Mammary epithelial cell (primary cell): ENCODE measurements at regions of chr1 and their contacts with region 1.

Region 1: GRCh38 chr1:58727363-58727762 is 27.5 kb upstream of the MYSM1 start:
- DNase-seq: peak; percentile 98
- H3K4me3 ChIP-seq: no peak overlapping the region
- H3K27ac ChIP-seq: peak overlapping the region; percentile 74
- H3K4me1 ChIP-seq: peaks cover 30% of the 10 kb centered on the region
- H3K27me3 ChIP-seq: no peaks in the 10 kb centered on the region
- CTCF ChIP-seq: no peak

Region 2: DNA sequence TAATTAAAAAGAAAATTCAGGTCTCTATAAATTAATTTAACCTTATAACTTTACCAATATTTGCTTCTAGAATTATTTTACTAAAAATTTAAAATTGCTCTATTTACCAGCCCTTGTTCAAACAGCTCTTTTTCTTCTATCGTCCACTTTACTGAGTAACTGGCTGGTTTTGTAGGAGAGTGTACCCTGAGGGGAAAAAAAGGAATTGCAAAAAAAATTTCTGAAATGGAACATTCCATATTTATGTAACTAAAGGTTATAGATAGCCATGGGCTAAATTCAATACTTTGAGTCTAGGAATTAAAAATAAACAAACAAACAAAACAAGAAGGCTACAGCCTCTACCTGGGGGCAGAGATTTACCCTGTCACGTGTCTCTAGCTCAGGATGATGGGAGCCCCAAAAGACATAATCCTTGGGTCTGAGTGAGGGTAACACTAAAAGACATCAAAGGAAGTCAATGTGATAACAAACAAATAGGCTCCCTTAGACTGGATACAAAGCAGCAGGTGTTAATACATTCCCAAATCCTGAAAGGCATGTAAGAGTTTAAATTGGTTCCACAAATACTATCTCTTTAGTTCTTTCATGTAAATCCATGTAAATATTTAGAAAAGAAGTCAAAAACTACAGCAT is 38.3 kb before region 1 on chr1:
- CTCF ChIA-PET with region 1: no interaction called
- dilution Hi-C with region 1: no loop called
- in situ Hi-C with region 1: no loop called
- intact Hi-C with region 1: no loop called
- DNase-seq: no peak
- H3K4me3 ChIP-seq: no peak overlapping the region
- H3K27ac ChIP-seq: no peak overlapping the region
- H3K4me1 ChIP-seq: no peaks in the 10 kb centered on the region
- H3K27me3 ChIP-seq: no peaks in the 10 kb centered on the region
- CTCF ChIP-seq: no peak

Region 3: DNA sequence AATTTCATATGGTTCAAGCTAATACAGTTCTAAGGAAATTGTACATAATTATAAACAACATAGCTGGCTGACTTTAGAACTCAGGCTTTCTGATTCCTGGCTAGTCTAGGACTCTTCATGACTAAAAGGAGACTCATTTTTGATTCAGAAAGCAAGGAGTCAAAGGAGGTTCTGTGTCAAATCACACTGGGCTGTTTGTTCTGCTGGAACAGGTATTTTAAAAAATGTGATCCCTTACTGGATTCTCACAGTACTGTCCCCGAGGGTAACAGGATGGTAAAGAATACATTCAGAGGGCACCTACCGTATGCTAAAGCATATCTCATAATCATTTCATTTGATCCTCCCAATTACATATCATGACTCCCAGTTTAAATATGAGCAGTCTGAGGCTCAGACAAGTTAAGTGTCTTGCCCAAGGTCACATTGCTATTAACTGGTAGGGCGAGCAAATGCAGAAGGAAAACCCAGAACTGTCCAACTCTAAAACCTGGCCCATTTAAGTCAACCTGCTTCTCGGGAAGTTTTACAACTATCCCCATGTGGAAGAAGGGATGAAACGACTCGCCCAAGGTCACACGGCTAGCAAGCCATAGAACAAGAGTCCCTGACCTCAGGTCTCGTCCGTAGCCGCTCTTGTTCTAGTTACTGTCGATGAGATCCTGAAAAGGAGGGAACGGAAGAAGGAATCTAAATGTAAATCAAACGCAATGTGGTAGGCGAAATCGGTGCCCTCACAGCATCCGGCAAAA is 28.2 kb before region 1 on chr1:
- CTCF ChIA-PET with region 1: interaction called, 3 read pairs
- dilution Hi-C with region 1: no loop called
- in situ Hi-C with region 1: no loop called
- intact Hi-C with region 1: loop called (anchors 1 kb)
- DNase-seq: peak; percentile 8
- H3K4me3 ChIP-seq: peak overlapping the region; percentile 54 to 88 (median 82)
- H3K27ac ChIP-seq: peak overlapping the region; percentile 86
- H3K4me1 ChIP-seq: peaks cover 6% of the 10 kb centered on the region
- H3K27me3 ChIP-seq: no peaks in the 10 kb centered on the region
- CTCF ChIP-seq: no peak